CD8-positive, alpha-beta memory T cell (primary cell): ENCODE measurements at regions of chr2 and their contacts with region 1.

Region 1: DNA sequence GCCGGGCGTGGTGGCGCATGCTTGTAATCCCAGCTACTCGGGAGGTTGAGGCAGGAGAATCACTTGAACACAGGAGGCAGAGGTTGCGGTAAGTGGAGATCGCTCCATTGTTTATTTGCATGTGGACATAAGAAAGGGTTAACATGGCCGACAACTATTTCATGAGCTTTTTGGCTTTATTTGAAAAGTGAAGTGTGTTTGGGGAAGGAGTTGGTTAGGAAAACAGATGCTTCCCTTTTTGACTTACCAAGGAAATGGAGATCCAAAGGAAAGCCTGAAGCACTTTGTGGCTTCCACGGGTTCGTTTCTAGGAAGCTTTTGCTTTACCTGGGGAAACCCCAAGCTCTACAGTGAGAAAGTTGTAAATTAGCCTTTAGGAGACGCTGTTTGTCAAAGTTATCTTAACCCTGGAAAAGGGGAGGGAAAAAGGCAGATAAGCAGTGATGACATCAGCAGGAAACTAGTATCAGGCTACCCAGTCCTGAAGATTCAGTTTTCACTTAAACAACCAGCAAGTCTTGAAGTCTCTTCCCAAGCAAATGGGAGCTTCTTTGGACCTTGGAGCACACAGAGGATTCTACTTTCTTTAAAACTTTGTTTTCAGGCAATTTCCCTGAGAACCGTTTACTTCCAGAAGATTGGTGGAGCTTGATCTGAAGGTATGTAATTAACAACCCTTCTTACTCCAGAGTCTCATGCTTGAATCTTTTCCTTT is at the start of gene CASP10:
- DNase-seq: peak in 3 of 5 donors; percentile 22 to 79 (median 60)
- H3K4me3 ChIP-seq: peak within 1 kb of the TSS; percentile 93
- H3K4me3 Mint-ChIP-seq: peak within 1 kb of the TSS; percentile 88 to 97 (median 92)
- H3K27ac ChIP-seq: peak within 1 kb of the TSS; percentile 81
- H3K27ac Mint-ChIP-seq: peak within 1 kb of the TSS; percentile 76 to 97 (median 92)
- H3K4me1 ChIP-seq: peaks cover 23% of the 10 kb centered on the region
- H3K4me1 Mint-ChIP-seq: peaks cover 44 to 50% (median 49%) of the 10 kb centered on the region in 3 donors
- H3K27me3 ChIP-seq: no peaks in the 10 kb centered on the region
- H3K27me3 Mint-ChIP-seq: no peaks in the 10 kb centered on the region
- total RNA-seq, gene CASP10: 6.7 to 7.3 TPM

Region 2: DNA sequence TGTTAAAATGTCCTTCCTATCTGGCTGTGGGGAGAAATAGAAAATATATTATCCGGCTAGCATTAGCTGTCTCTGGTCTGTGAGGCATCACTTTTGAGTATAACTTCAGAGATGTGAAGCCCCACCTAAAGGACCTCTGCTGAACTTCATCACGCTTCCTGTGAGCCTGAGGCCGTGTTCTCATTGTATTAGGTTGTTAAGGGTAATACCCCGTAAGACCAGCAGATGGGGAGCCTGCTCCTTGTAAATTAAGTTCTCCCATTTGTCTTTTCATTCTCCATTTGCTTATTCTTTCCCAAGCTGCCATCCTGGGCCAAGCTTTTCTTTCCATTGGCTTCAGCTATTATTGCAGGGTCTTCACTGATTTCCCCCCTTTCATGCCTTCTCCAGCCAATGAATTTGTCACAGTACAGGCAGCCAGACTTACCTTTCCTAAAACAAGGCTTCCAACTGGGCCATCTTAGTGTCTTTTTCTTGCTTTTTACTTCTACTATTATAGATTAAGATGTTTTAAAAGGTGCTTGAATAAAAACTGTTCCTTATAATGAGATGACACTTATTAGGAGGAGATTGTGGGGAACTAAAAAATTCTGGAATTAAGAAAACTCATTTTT is 281.2 kb before region 1 on chr2:
- CTCF ChIA-PET with region 1: interaction called, 19 read pairs
- POLR2A ChIA-PET with region 1: no interaction called
- DNase-seq: peak; percentile 58 to 84 (median 71)
- H3K4me3 ChIP-seq: no peak overlapping the region
- H3K4me3 Mint-ChIP-seq: no peak overlapping the region
- H3K27ac ChIP-seq: no peak overlapping the region
- H3K27ac Mint-ChIP-seq: peak overlapping the region; percentile 1 to 92 (median 55)
- H3K4me1 ChIP-seq: no peaks in the 10 kb centered on the region
- H3K4me1 Mint-ChIP-seq: peaks cover 3 to 14% (median 9%) of the 10 kb centered on the region in 3 donors
- H3K27me3 ChIP-seq: no peaks in the 10 kb centered on the region
- H3K27me3 Mint-ChIP-seq: no peaks in the 10 kb centered on the region

Region 3: GRCh38 chr2:201194097-201194496 is 11.3 kb after region 1 on chr2:
- CTCF ChIA-PET with region 1: interaction called, 16 read pairs
- POLR2A ChIA-PET with region 1: interaction called, 6 read pairs
- DNase-seq: peak in 2 of 5 donors; percentile 19 to 20
- H3K4me3 ChIP-seq: peak overlapping the region; percentile 14
- H3K4me3 Mint-ChIP-seq: peak overlapping the region; percentile 5 to 81 (median 77)
- H3K27ac ChIP-seq: no peak overlapping the region
- H3K27ac Mint-ChIP-seq: peak overlapping the region; percentile 53 to 93 (median 90)
- H3K4me1 ChIP-seq: peaks cover 68% of the 10 kb centered on the region
- H3K4me1 Mint-ChIP-seq: peaks cover 51 to 74% (median 66%) of the 10 kb centered on the region in 3 donors
- H3K27me3 ChIP-seq: no peaks in the 10 kb centered on the region
- H3K27me3 Mint-ChIP-seq: no peaks in the 10 kb centered on the region